ENCODE measurements at regions of chr18 and their contacts with region 1.

Region 1: GRCh38 chr18:47215554-47216138 is 35.8 kb downstream of the SKOR2 start:
- H3K4me3 ChIP-seq: no peak overlapping the region
- H3K27ac ChIP-seq: no peak overlapping the region
- H3K4me1 ChIP-seq: no peaks in the 10 kb centered on the region
- CTCF ChIP-seq: peak; percentile 84

Region 2: DNA sequence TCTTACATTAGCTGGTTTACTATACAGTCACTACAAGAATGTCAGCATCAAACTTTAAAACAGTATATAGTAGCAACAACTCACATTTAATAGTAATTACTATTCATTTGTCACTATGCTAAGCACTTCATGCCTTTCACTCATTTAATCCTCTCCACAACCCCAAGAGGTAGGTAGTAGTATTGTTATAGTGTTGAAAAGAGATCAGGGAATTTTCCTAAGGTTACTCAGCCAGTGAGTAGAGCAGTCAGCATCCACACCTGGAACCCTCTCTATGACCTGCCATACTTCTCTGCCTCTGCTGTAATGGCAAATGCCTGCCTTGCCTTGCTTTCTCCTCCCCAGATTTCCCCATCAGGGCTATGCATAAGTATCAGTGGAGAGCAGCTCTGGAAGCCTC is 11.0 kb after region 1 on chr18:
- CTCF ChIA-PET with region 1: interaction called, 16 read pairs
- POLR2A ChIA-PET with region 1: interaction called, 3 read pairs
- H3K4me3 ChIP-seq: no peak overlapping the region
- H3K27ac ChIP-seq: no peak overlapping the region
- H3K4me1 ChIP-seq: no peaks in the 10 kb centered on the region
- CTCF ChIP-seq: no peak

Region 3: DNA sequence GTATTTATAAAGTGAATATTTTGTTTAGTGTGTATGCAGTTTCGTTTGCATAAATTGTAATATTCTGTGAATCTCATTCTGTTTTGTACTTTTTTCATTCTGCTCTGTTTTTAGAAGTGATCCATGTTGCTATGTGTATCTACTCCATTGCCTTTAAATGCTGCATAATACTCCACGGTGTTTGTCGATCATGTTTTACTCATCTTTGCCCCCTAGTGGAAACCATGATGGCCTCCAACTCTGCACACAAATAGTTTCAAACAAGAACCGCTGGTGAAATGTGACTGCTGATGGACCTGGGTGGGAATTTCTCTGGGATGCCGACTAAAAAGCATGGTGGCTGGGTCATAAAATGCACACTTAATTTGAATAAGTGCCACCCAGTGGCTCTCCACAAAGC is 67.8 kb after region 1 on chr18:
- CTCF ChIA-PET with region 1: interaction called, 18 read pairs
- POLR2A ChIA-PET with region 1: no interaction called
- H3K4me3 ChIP-seq: no peak overlapping the region
- H3K27ac ChIP-seq: no peak overlapping the region
- H3K4me1 ChIP-seq: no peaks in the 10 kb centered on the region
- CTCF ChIP-seq: 0 out of 2 replicates have a peak, but pooled peaks have one; percentile 20

Region 4: GRCh38 chr18:47737956-47738355 is 522.3 kb after region 1 on chr18:
- CTCF ChIA-PET with region 1: interaction called, 22 read pairs
- POLR2A ChIA-PET with region 1: interaction called, 3 read pairs
- H3K4me3 ChIP-seq: no peak overlapping the region
- H3K27ac ChIP-seq: no peak overlapping the region
- H3K4me1 ChIP-seq: no peaks in the 10 kb centered on the region
- CTCF ChIP-seq: no peak

Region 5: GRCh38 chr18:47748847-47749599 is 533.4 kb after region 1 on chr18:
- CTCF ChIA-PET with region 1: interaction called, 86 read pairs
- POLR2A ChIA-PET with region 1: no interaction called
- H3K4me3 ChIP-seq: peak overlapping the region; percentile 12; the same call in 1 of the 2 replicates
- H3K27ac ChIP-seq: no peak overlapping the region
- H3K4me1 ChIP-seq: no peaks in the 10 kb centered on the region
- CTCF ChIP-seq: peak; percentile 93

Region 6: GRCh38 chr18:47756364-47757016 is 540.8 kb after region 1 on chr18:
- CTCF ChIA-PET with region 1: interaction called, 68 read pairs
- POLR2A ChIA-PET with region 1: no interaction called
- H3K4me3 ChIP-seq: no peak overlapping the region
- H3K27ac ChIP-seq: no peak overlapping the region
- H3K4me1 ChIP-seq: no peaks in the 10 kb centered on the region
- CTCF ChIP-seq: peak; percentile 72; the same call in 1 of the 2 replicates